ENCODE measurements at regions of chr1 and their contacts with region 1.

Region 1: DNA sequence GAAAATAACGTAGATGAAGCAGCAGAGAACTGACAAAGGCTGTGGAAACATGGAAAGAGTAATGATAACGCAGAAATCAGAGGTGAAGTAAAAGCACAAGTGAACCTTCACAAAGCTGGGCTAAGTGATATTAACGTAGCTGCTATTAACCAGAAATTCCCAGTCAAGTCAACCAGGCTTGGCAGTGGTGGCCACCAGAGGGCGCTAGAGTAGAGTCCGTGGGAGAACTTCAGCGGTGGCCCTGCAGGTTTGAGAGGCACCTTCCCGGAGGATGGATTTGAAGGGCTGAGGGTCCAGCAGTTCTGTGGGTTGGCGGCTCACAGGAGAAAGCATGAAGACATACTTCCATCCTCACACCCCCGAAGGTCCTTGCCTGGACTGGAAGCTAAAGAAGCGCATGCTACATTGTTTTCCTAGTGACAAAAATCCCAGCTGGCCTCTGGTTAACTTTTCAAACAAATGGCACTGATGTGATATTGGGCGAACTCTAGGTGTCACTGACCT is 81.7 kb upstream of the ZNF648 start:
- DNase-seq: peak; percentile 94
- H3K4me3 Mint-ChIP-seq: peak overlapping the region; percentile 28
- H3K27ac Mint-ChIP-seq: peak overlapping the region; percentile 97
- H3K4me1 Mint-ChIP-seq: peaks cover 53% of the 10 kb centered on the region
- H3K27me3 Mint-ChIP-seq: no peaks in the 10 kb centered on the region
- CTCF ChIP-seq: peak; percentile 95

Region 2: DNA sequence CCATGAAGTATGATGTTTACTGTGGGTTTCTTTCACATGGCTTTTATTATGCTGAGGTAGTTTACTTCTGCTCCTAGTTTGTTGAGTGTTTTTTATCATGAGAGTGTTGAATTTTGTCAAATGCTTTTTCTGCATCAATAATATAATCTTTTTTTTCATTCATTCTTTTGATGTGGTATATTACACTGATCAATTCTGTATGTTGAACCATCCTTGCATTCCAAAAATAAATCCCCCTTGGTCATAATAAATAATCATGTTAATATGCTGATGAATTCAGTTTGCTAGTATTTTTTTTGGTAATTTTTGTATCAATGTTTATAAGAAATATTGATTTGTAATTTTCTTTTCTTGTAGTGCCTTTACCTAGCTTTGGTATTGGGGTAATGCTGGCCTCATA is 16.2 kb after region 1 on chr1:
- CTCF ChIA-PET with region 1: interaction called, 4 read pairs
- POLR2A ChIA-PET with region 1: interaction called, 10 read pairs
- intact Hi-C with region 1: no loop called
- DNase-seq: no peak
- H3K4me3 Mint-ChIP-seq: no peak overlapping the region
- H3K27ac Mint-ChIP-seq: no peak overlapping the region
- H3K4me1 Mint-ChIP-seq: no peaks in the 10 kb centered on the region
- H3K27me3 Mint-ChIP-seq: no peaks in the 10 kb centered on the region
- CTCF ChIP-seq: no peak

Region 3: GRCh38 chr1:182206626-182207239 is 63.5 kb after region 1 on chr1:
- CTCF ChIA-PET with region 1: interaction called, 42 read pairs
- POLR2A ChIA-PET with region 1: interaction called, 17 read pairs
- intact Hi-C with region 1: no loop called
- DNase-seq: no peak
- H3K4me3 Mint-ChIP-seq: no peak overlapping the region
- H3K27ac Mint-ChIP-seq: no peak overlapping the region
- H3K4me1 Mint-ChIP-seq: peaks cover 5% of the 10 kb centered on the region
- H3K27me3 Mint-ChIP-seq: no peaks in the 10 kb centered on the region
- CTCF ChIP-seq: no peak

Region 4: DNA sequence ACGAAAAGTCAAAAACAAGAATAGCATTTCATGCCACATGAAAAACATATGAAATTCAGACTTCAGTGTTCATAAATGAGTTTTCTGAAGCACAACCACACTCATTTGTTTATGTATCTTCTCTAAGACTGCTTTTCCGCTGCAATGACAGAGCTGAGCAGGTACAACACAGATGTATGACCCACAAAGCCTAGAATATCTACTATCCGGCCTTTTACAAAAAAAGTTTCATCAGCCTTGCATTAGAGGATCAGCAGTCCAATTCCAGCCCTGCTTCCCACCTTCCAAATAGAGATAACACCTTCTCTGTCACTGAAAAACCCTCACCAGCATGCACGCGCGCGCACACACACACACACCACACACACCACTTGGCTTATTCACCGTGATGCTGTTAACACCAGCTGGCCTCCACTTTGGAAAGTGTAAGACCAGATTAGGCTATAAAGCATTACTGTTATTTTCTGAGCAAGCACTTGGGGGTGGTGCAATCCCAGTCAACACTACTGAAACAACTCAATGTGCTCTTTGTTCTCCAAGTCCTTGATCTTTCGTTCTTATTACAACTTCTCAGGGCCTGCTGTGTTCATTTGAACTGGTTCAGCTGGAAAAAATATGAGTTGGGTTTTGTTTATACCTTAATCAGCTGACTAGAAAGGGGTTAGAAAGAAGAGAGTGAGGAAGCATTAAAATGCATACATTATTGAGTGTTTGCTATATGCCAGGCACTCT is 158.4 kb after region 1 on chr1:
- CTCF ChIA-PET with region 1: interaction called, 13 read pairs
- POLR2A ChIA-PET with region 1: interaction called, 17 read pairs
- intact Hi-C with region 1: no loop called
- DNase-seq: peak; percentile 42
- H3K4me3 Mint-ChIP-seq: no peak overlapping the region
- H3K27ac Mint-ChIP-seq: no peak overlapping the region
- H3K4me1 Mint-ChIP-seq: peaks cover 24% of the 10 kb centered on the region
- H3K27me3 Mint-ChIP-seq: no peaks in the 10 kb centered on the region
- CTCF ChIP-seq: no peak

Region 5: GRCh38 chr1:182381962-182382819 is 239.0 kb after region 1 on chr1:
- CTCF ChIA-PET with region 1: interaction called, 91 read pairs
- POLR2A ChIA-PET with region 1: no interaction called
- intact Hi-C with region 1: no loop called
- DNase-seq: no peak
- H3K4me3 Mint-ChIP-seq: no peak overlapping the region
- H3K27ac Mint-ChIP-seq: peak overlapping the region; percentile 78
- H3K4me1 Mint-ChIP-seq: peaks cover 39% of the 10 kb centered on the region
- H3K27me3 Mint-ChIP-seq: no peaks in the 10 kb centered on the region
- CTCF ChIP-seq: no peak

Region 6: GRCh38 chr1:182588500-182589452 is 445.6 kb after region 1 on chr1 and contains the start of gene RNASEL:
- CTCF ChIA-PET with region 1: interaction called, 5 read pairs
- POLR2A ChIA-PET with region 1: interaction called, 13 read pairs
- intact Hi-C with region 1: no loop called
- DNase-seq: peak; percentile 85
- H3K4me3 Mint-ChIP-seq: peak within 1 kb of the TSS; percentile 84
- H3K27ac Mint-ChIP-seq: peak within 1 kb of the TSS; percentile 93
- H3K4me1 Mint-ChIP-seq: peaks cover 5% of the 10 kb centered on the region
- H3K27me3 Mint-ChIP-seq: no peaks in the 10 kb centered on the region
- CTCF ChIP-seq: no peak
- total RNA-seq, gene RNASEL: 4.2 and 8.0 TPM in 2 replicates

Measured in MCF 10A (cell line).